MCF 10A (cell line): ENCODE measurements at regions of chr1 and their contacts with region 1.

Region 1: DNA sequence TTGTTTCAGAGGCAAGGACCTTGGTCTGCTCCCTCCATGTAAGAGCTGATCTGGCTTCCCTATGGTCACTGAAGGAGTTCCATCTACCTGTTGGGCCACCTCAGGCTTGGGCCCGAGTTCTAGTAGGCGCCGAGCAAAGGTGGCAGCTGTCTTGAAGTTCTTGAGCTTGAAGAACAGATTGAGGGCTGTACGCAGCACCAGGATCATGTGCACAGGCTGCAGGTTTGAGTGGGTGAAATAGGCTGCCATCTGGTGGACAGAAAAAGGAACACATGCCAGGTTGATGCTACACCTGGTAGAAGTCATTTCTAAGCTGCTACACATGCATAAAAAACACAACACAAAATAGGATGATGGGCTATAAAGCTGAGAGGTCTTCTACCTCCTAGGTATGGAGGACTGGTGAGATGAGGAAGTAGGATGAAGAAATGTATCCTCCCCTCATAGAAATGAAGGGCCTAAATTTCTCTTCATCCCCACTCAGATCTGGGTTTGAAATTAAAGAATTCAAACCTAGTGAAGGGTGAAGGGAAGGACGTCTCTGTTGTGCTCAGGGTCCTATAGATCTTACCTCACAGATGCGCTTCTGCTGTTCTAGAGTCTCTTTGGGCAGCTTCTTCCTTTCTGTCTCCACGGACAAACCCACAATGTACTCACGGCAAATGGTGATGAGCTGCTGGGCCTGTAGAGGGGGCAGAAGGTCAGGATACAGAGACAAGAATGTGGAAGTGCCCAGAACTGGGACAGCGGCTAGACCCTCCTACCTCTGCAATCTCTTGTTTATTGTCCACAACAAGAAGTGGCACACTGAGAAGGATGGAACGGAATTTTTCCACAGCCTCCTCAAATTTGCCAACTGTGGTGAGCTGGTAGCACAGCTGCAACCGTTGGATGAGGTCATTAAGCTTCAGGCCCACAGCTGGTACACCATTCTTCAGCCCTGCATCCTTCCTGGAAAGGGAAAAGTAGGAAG is 6.6 kb upstream of the PEX19 start:
- DNase-seq: peak; percentile 79
- H3K4me3 Mint-ChIP-seq: no peak overlapping the region
- H3K27ac Mint-ChIP-seq: peak overlapping the region; percentile 61
- H3K4me1 Mint-ChIP-seq: no peaks in the 10 kb centered on the region
- H3K27me3 Mint-ChIP-seq: no peaks in the 10 kb centered on the region
- CTCF ChIP-seq: peak; percentile 89

Region 2: GRCh38 chr1:160078512-160079195 is 212.9 kb before region 1 on chr1:
- CTCF ChIA-PET with region 1: interaction called, 23 read pairs
- POLR2A ChIA-PET with region 1: no interaction called
- intact Hi-C with region 1: no loop called
- DNase-seq: peak; percentile 67
- H3K4me3 Mint-ChIP-seq: no peak overlapping the region
- H3K27ac Mint-ChIP-seq: no peak overlapping the region
- H3K4me1 Mint-ChIP-seq: no peaks in the 10 kb centered on the region
- H3K27me3 Mint-ChIP-seq: peaks cover 64% of the 10 kb centered on the region
- CTCF ChIP-seq: peak; percentile 98

Region 3: DNA sequence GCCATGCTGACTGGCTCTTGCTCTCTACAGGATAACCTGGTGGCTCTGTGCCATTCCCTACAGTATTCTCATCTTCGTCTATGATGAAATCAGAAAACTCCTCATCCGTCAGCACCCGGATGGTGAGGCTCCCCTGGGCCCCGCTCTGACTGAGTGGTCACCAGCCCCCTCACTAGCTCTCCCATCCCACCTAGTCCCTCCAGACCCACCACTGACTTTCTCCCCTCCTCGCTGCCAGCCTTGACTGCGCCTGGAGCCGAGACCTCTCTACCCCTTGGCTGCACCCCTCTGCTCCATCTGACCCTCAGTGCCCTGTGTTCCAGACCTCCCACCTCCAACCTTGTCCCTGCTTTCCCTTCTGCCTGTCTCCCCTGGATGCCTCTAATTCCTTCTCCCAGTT is 105.3 kb before region 1 on chr1:
- CTCF ChIA-PET with region 1: interaction called, 208 read pairs
- POLR2A ChIA-PET with region 1: interaction called, 6 read pairs
- intact Hi-C with region 1: no loop called
- DNase-seq: no peak
- H3K4me3 Mint-ChIP-seq: no peak overlapping the region
- H3K27ac Mint-ChIP-seq: no peak overlapping the region
- H3K4me1 Mint-ChIP-seq: no peaks in the 10 kb centered on the region
- H3K27me3 Mint-ChIP-seq: peaks cover 12% of the 10 kb centered on the region
- CTCF ChIP-seq: no peak

Region 4: DNA sequence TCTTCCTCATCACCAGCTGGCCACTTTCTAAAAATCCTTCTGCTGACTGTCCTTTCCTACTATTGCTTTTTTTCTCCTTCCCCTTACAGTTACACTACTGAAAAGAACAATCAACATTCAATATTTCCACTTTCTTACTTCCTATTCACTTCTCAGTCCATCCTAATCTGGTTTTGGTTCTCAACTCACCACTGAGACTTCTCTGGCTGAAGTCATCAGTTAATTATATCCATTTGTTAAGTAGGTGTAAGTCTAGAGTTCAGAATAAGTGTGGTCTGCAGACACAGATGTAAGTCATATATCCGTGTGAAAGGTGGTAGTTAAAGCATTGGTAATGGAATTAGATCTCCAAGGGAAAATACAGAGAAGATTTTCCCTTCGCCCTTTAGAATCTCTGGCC is 64.9 kb before region 1 on chr1:
- CTCF ChIA-PET with region 1: interaction called, 50 read pairs
- POLR2A ChIA-PET with region 1: interaction called, 3 read pairs
- intact Hi-C with region 1: no loop called
- DNase-seq: no peak
- H3K4me3 Mint-ChIP-seq: no peak overlapping the region
- H3K27ac Mint-ChIP-seq: no peak overlapping the region
- H3K4me1 Mint-ChIP-seq: no peaks in the 10 kb centered on the region
- H3K27me3 Mint-ChIP-seq: no peaks in the 10 kb centered on the region
- CTCF ChIP-seq: no peak

Region 5: GRCh38 chr1:160261893-160262794 is 29.4 kb before region 1 on chr1 and contains the start of gene DCAF8:
- CTCF ChIA-PET with region 1: interaction called, 133 read pairs
- POLR2A ChIA-PET with region 1: interaction called, 51 read pairs
- intact Hi-C with region 1: no loop called
- DNase-seq: peak; percentile 99
- H3K4me3 Mint-ChIP-seq: peak within 1 kb of the TSS; percentile 97
- H3K27ac Mint-ChIP-seq: peak within 1 kb of the TSS; percentile 100
- H3K4me1 Mint-ChIP-seq: peaks cover 28% of the 10 kb centered on the region
- H3K27me3 Mint-ChIP-seq: peaks cover 8% of the 10 kb centered on the region
- CTCF ChIP-seq: no peak
- total RNA-seq, gene DCAF8: 181 and 208 TPM in 2 replicates

Region 6: GRCh38 chr1:160315359-160315758 is 23.8 kb after region 1 on chr1:
- CTCF ChIA-PET with region 1: interaction called, 26 read pairs
- POLR2A ChIA-PET with region 1: interaction called, 4 read pairs
- intact Hi-C with region 1: no loop called
- DNase-seq: no peak
- H3K4me3 Mint-ChIP-seq: no peak overlapping the region
- H3K27ac Mint-ChIP-seq: no peak overlapping the region
- H3K4me1 Mint-ChIP-seq: peaks cover 15% of the 10 kb centered on the region
- H3K27me3 Mint-ChIP-seq: no peaks in the 10 kb centered on the region
- CTCF ChIP-seq: no peak

Region 7: DNA sequence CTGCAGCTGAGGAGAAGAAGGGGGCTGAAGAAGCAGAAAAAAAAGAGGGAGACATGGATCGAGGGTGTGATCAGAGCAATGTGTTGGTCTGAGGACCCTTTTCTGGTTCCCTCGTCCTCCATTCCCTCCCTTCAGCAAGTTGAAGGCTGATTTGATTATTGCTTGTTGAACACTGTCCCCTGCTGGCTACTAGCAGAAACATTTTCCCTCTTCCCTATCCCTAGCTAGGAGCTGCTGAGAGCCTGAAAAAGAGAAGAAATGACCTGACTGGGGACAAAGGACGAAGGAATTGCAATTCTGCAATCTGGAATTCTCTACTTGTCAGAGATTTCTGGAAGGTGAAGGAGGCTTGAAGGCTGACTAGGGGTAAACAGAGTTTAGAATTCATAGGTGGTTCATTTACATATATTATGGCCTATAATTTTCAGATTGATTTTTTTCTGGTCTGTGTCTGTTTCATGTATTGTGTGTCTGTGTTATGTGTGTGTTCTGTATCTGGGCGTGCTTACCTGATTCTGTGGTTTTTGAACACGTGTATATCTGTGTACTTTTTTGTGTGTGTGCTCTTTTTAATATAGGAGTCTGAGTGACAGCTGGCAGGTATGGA is 85.1 kb after region 1 on chr1:
- CTCF ChIA-PET with region 1: interaction called, 31 read pairs
- POLR2A ChIA-PET with region 1: no interaction called
- intact Hi-C with region 1: no loop called
- DNase-seq: peak; percentile 81
- H3K4me3 Mint-ChIP-seq: no peak overlapping the region
- H3K27ac Mint-ChIP-seq: no peak overlapping the region
- H3K4me1 Mint-ChIP-seq: peaks cover 13% of the 10 kb centered on the region
- H3K27me3 Mint-ChIP-seq: peaks cover 19% of the 10 kb centered on the region
- CTCF ChIP-seq: peak; percentile 98